WTC11 (cell line): ENCODE measurements at regions of chr14 and their contacts with region 1.

Region 1: DNA sequence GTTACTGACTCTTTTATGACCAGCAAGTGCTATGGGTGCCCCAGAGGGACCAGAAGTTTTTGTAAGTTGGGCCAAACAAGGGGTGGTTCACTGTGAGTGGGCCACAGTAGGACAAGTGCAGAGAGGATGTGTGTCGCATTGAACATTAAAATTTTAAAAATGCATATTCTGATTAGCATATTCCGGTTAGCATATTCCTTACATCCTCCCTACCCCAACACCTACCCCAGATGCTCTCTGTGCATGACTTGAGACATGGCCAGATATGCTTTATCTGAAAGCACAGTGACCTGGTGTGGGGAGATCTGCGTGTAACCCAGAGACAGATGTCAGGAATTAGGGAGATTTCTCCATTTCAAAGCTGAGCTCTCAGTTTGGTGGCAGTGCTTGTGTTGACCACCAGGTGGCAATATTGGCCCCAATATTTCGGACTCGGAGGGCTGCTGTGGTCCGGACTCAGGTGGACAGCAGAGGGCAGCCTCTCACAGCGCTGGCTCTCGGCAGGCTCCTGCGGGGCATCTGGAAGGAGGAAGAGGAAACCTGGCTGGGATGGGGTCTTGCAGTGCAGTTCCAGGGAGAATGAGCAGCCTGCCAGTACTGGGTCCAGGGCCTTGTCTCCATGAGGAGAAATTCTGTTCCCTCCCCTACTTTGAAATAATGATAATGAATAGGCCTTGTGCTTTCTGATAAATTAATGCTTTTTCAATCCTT is 1.6 kb upstream of the CEBPE start:
- DNase-seq: peak; percentile 94
- ATAC-seq: peak; percentile 79
- H3K4me3 Mint-ChIP-seq: no peak overlapping the region
- H3K27ac Mint-ChIP-seq: peak overlapping the region; percentile 30; the same call in 1 of the 2 replicates
- H3K4me1 Mint-ChIP-seq: peaks cover 61% of the 10 kb centered on the region
- H3K27me3 Mint-ChIP-seq: peaks cover 4% of the 10 kb centered on the region; the same call in 1 of the 2 replicates
- CTCF ChIP-seq: peak; percentile 98

Region 2: DNA sequence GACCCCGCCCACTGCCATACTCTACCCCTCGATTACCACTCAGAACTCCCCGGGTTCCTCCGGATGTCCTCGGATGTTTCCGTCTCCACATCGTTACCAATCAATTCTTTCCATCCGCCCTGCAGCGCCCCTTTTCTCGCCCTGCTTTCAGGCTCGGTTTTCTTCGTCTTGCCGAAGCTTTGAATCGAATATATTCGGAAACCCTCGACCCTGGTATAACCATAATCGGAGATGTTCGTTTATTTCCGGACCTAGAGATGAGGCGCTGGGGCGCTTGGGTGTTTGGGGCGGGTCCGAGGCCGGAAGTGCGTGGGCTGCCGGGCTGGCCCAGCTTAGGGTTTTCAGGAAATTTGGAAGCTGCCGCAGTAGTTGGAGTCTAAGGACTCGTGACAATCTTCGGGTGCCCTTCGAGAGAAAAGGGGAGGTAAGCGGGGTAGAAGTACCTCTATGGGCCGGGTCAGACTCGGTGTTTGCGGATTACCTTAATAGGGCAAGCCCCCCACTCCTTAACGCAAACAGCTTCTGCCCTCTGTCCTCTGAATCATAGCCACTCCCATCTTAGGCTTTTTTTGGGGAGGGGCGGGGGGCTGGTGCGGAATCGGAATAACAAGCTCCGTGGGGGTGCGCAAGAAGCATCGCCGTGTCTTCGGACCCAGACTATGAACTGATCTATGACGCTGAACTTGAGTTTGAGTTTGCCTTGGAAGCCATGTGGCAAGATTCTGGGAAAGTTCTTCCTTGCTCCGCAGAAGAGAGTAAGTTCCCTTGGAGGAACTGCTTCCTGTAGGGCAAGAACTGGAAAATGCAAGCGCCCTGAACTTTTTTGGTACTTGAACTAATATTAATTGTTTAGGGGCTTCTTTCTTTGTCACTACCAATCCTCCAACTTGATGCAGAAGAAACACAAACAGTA is 25.2 kb before region 1 on chr14 and contains the start of gene C14orf119:
- CTCF ChIA-PET with region 1: interaction called, 71 read pairs
- POLR2A ChIA-PET with region 1: interaction called, 8 read pairs
- DNase-seq: peak; percentile 100
- ATAC-seq: peak; percentile 91
- H3K4me3 Mint-ChIP-seq: no peak within 1 kb of the TSS
- H3K27ac Mint-ChIP-seq: no peak within 1 kb of the TSS
- H3K4me1 Mint-ChIP-seq: peaks cover 37% of the 10 kb centered on the region
- H3K27me3 Mint-ChIP-seq: no peaks in the 10 kb centered on the region; the same call in 1 of the 2 replicates
- CTCF ChIP-seq: no peak
- total RNA-seq, gene C14orf119: 67.8 to 81.3 TPM (median 71.3 TPM) in 3 replicates

Region 3: DNA sequence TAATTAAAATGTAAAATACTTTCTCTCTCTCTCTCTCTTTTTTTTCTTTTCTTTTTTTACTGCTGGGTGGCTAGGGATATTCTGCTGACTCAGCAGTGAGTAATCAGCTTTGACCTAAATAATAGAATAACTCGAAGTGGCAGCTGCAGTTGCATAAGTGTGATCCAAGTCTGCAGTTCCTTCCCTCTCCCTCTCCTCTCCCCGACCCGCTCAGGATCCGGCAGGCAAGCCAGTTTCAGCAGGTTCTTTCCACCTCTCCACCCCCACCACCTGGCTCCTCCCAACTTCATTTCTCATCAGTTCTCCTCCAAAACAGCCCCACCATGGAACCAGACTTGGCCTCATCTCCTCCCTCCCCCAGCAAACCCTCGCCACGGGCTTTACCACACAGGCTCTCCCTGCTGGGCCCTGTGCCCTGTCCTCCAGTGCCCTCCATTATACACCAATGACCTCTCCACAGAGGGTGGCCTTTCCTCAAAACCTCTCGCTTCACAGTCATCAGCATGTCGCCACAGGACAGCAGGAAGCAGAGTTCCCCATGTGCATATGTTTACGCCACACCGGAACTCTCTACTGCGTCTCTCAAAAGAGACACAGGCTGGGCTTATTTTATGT is 40.3 kb after region 1 on chr14:
- CTCF ChIA-PET with region 1: interaction called, 49 read pairs
- POLR2A ChIA-PET with region 1: interaction called, 3 read pairs
- DNase-seq: peak; percentile 88
- ATAC-seq: peak; percentile 94
- H3K4me3 Mint-ChIP-seq: peak overlapping the region; percentile 53
- H3K27ac Mint-ChIP-seq: peak overlapping the region; percentile 98
- H3K4me1 Mint-ChIP-seq: peaks cover 65% of the 10 kb centered on the region
- H3K27me3 Mint-ChIP-seq: no peaks in the 10 kb centered on the region
- CTCF ChIP-seq: no peak

Region 4: DNA sequence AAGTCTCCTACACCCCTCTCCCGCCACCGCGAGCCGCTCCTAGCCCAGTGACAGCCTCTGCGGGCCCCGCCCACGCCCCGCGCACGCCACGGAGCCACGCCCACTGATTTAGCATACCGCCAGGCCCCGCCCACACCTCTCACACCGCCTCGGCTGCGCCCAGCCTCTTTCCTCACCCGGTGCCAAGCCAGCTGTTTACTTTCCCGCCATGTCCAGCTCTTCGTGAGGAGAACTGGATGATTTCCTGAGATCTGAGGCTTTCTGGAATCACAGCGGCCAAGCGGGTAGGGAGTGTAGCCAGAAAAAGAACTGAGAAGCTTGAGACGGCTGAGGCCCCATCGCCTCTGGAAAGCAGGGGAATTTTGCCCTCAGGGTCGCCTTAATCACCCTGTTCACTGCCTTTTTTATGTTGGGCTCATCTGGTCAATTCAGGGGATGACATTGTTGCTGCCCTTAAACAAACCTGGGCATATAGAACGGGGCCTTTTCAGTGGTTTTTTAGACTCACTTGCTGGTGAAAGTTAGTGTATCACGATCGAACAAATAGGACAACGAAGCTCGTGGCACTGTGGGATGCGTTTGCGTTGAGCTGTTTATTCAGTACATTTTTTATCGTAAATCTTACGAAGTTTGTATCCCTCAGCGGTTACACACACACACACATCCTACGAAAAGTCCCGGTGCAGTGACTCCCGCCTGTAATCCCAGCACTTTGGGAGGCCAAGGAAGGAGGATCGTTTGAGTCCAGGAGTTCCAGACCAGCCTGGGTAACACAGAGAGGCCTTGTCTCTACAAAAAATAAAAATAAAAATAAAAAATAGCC is 117.3 kb after region 1 on chr14 and contains the start of gene RNF212B:
- CTCF ChIA-PET with region 1: interaction called, 26 read pairs
- POLR2A ChIA-PET with region 1: no interaction called
- DNase-seq: peak; percentile 98
- ATAC-seq: peak; percentile 100
- H3K4me3 Mint-ChIP-seq: peak within 1 kb of the TSS; percentile 55
- H3K27ac Mint-ChIP-seq: peak within 1 kb of the TSS; percentile 72
- H3K4me1 Mint-ChIP-seq: peaks cover 11% of the 10 kb centered on the region
- H3K27me3 Mint-ChIP-seq: no peaks in the 10 kb centered on the region
- CTCF ChIP-seq: no peak
- total RNA-seq, gene RNF212B: 0.27 to 0.55 TPM (median 0.46 TPM) in 3 replicates

Region 5: DNA sequence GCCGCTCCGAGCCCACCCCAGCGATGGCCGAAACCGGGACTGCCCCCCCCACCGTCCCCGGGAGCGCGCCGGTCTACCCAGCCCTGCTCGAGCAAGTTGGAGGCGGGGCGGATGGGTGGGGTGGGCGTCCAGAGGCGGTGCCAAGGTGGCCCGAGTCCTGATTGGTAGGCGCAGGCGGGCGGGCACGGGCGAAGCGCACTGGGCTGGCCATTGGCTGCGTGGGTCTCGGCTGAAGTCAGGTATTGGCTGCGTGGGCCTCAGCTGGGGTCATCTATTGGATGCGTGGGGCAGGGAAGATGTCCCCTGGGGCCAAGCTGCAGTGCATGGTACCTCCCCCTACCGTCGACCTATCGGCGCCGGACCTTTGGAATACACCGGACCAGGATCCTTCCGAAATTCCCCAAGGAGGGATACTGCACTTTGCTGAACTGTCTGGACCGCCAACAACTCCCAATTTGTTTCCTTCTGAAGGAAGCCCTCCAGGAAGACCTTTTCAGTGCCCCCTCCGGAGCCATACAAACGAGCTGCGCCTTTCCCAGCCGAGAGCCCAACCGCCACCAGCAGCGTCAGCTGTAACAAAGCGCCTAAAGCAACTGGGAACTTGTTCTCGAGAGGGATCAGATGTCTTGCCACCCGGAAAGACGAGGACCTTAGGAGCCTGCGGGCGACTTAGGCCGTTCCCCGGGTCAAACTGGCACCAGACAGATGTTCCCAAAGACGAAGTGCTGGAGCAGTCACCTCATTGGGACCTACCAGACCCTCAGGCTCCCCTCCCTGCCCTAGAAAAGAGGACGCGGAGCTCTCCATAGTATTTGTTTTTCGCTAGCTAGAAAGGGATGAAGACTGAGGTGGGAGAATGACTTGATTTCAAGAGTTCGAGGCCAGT is 165.6 kb after region 1 on chr14 and contains the start of gene HOMEZ:
- CTCF ChIA-PET with region 1: interaction called, 21 read pairs
- POLR2A ChIA-PET with region 1: no interaction called
- DNase-seq: peak; percentile 98
- ATAC-seq: peak; percentile 98
- H3K4me3 Mint-ChIP-seq: peak within 1 kb of the TSS; percentile 93
- H3K27ac Mint-ChIP-seq: peak within 1 kb of the TSS; percentile 100
- H3K4me1 Mint-ChIP-seq: peaks cover 14% of the 10 kb centered on the region
- H3K27me3 Mint-ChIP-seq: peaks cover 62% of the 10 kb centered on the region
- CTCF ChIP-seq: no peak
- total RNA-seq, gene HOMEZ: 9.4 to 10.7 TPM (median 10.1 TPM) in 3 replicates

Region 6: GRCh38 chr14:23320774-23321571 is 200.3 kb after region 1 on chr14 and contains the start of gene PABPN1:
- CTCF ChIA-PET with region 1: interaction called, 39 read pairs
- POLR2A ChIA-PET with region 1: no interaction called
- DNase-seq: peak; percentile 98
- ATAC-seq: peak; percentile 93
- H3K4me3 Mint-ChIP-seq: peak within 1 kb of the TSS; percentile 96
- H3K27ac Mint-ChIP-seq: peak within 1 kb of the TSS; percentile 99
- H3K4me1 Mint-ChIP-seq: peaks cover 26% of the 10 kb centered on the region
- H3K27me3 Mint-ChIP-seq: no peaks in the 10 kb centered on the region
- CTCF ChIP-seq: no peak
- total RNA-seq, gene PABPN1: 290 to 321 TPM (median 295 TPM) in 3 replicates

Region 7: DNA sequence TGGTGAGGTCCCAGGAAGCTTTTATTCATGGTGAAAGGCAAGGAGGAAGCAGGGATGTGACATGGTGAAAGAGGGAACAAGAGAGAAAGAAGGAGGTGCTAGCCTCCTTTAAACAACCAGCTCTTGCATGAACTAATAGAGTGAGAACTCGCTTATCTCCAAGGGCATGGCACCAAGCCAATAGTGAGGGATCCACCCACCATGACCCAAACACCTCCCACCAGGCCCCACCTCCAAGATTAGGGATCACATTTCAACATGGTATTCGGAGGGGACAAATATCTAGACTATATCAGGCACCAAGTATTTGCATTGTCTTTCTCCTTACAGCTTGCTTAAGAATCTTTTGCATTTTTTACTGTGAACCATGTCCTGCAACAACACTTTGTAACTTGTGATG is 741.0 kb after region 1 on chr14:
- CTCF ChIA-PET with region 1: no interaction called
- POLR2A ChIA-PET with region 1: no interaction called
- DNase-seq: no peak
- ATAC-seq: peak; percentile 56; the same call in 1 of the 2 replicates
- H3K4me3 Mint-ChIP-seq: no peak overlapping the region
- H3K27ac Mint-ChIP-seq: no peak overlapping the region
- H3K4me1 Mint-ChIP-seq: peaks cover 17% of the 10 kb centered on the region
- H3K27me3 Mint-ChIP-seq: no peaks in the 10 kb centered on the region; the same call in none of the 2 replicates
- CTCF ChIP-seq: no peak